Endothelial cell of umbilical vein (primary cell): ENCODE measurements at regions of chr19 and their contacts with region 1.

Region 1: DNA sequence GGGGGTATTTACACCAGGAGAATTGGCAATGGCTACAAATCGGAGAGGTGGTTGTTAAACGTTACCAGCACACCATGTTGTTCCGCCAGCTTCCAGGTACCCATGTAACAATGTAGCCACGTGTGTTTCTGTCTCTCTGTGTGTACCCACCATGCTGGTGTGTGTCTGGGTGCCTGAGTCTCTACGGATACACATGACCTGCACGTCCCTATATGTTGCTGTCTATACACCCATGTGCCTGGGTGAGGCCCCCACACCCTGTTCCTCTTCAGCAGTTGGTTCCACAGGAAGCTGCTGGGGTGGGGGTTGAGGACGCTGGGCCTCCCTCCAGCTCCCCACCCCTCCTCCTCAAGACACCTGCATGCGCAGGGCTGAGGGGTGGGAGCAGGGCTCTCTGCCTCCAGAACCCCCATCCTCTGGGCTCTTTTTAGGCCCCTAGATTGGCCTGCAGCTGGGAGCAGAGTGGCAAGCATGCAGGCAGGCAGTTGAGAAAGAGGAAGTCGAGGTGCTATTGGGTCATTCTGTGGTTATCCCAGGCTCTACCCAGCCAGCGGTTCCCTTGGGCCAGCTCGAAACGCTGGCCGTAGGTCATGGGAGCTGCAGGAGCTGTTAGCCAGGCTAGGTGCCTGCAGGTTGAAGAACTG is at the start of gene ARHGEF18:
- DNase-seq: no peak
- H3K4me3 ChIP-seq: no peak within 1 kb of the TSS
- H3K27ac ChIP-seq: no peak within 1 kb of the TSS
- H3K4me1 ChIP-seq: no peaks in the 10 kb centered on the region
- H3K27me3 ChIP-seq: no peaks in the 10 kb centered on the region
- CTCF ChIP-seq: no peak
- POLR2A ChIP-seq: no peak
- total RNA-seq, gene ARHGEF18: 24.3 and 30.7 TPM in 2 replicates

Region 2: GRCh38 chr19:7382694-7383093 is 34.0 kb after region 1 on chr19:
- CTCF ChIA-PET with region 1: interaction called, 10 read pairs
- POLR2A ChIA-PET with region 1: no interaction called
- dilution Hi-C with region 1: no loop called
- intact Hi-C with region 1: no loop called
- DNase-seq: no peak
- H3K4me3 ChIP-seq: no peak overlapping the region
- H3K27ac ChIP-seq: no peak overlapping the region
- H3K4me1 ChIP-seq: no peaks in the 10 kb centered on the region
- H3K27me3 ChIP-seq: no peaks in the 10 kb centered on the region
- CTCF ChIP-seq: no peak
- POLR2A ChIP-seq: no peak

Region 3: DNA sequence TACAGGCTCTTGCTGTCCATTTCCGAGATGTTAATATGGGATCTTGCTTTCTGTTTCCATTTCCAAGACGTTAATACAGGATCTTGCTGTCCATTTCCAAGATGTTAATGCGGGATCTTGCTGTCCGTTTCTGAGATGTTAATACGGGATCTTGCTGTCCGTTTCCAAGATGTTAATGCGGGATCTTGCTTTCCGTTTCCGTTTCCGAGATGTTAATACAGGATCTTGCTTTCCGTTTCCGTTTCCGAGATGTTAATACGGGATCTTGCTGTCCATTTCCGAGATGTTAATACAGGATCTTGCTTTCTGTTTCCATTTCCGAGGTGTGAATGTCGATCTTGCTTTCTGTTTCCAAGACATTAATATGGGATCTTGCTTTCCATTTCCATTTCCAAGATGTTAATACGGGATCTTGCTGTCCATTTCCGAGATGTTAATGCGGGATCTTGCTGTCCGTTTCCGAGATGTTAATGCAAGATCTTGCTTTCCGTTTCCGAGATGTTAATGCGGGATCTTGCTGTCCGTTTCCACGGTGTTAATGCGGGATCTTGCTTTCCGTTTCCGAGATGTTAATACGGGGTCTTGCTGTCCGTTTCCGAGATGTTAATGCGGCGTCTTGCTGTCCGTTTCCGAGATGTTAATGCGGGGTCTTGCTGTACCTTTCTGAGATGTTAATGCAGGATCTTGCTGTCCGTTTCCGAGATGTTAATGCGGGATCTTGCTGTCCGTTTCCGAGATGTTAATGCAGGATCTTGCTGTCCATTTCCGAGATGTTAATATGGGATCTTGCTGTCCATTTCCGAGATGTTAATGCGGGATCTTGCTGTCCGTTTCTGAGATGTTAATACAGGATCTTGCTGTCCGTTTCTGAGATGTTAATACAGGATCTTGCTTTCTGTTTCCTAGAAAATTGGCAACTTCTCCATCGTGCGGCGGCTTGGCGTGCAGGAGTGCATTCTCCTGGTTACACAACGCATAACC is 101.8 kb after region 1 on chr19:
- CTCF ChIA-PET with region 1: no interaction called
- POLR2A ChIA-PET with region 1: no interaction called
- dilution Hi-C with region 1: no loop called
- intact Hi-C with region 1: no loop called
- DNase-seq: peak; percentile 67
- H3K4me3 ChIP-seq: no peak overlapping the region
- H3K27ac ChIP-seq: no peak overlapping the region
- H3K4me1 ChIP-seq: no peaks in the 10 kb centered on the region
- H3K27me3 ChIP-seq: no peaks in the 10 kb centered on the region
- CTCF ChIP-seq: no peak
- POLR2A ChIP-seq: no peak